IMR-90 (cell line): ENCODE measurements at regions of chr1 and their contacts with region 1.

Region 1: DNA sequence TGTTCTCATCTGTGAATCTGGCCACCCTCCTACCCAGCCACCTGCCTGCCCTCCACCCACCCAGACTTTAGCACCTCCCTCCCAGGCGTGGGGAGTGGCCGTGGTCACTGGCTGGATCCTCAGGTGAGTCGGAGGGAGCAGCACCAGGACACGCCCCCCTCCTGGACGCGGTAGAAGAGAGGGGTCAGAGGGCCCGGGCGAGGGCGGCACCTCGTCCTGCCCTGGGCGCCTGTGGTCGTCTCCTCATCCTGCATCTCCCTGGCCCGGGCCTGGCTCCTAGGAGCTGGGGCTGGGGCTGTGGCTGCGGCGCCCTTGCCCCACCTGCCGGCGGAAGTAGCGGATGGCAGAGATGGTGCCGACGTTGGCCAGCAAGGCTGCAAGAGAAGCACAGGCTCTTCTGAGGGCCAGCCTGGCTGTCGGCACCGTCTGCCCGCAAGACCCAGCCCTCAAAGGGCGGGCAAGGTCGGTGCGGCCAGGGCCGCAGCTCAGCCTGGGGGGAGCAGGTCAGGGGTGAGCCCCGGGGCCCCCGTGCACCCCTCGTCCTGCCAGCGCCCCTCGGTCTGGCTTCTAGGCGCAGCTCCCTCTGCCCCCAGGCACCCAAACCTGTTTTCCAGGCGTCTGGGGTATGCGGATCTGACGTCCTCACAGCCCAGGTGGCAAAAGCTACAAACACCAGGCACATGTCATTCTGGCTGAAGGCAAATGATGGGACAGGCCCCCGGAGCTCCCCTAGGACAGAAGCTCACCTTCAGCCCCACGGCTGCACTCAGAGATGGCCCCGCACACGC is 5.8 kb downstream of the PERM1 start:
- DNase-seq: peak; percentile 36
- ATAC-seq: peak; percentile 95
- H3K4me3 ChIP-seq: peak overlapping the region; percentile 0; the same call in 1 of the 2 replicates
- H3K27ac ChIP-seq: no peak overlapping the region
- H3K4me1 ChIP-seq: 0 out of 2 replicates have a peak, but pooled peaks cover 2% of the 10 kb centered on the region
- H3K27me3 ChIP-seq: no peaks in the 10 kb centered on the region
- CTCF ChIP-seq: peak; percentile 65
- POLR2A ChIP-seq: no peak
- RAD21 ChIP-seq: peak; percentile 71

Region 2: GRCh38 chr1:869499-870244 is 106.4 kb before region 1 on chr1:
- CTCF ChIA-PET with region 1: no interaction called
- POLR2A ChIA-PET with region 1: no interaction called
- dilution Hi-C with region 1: no loop called
- in situ Hi-C with region 1: no loop called
- intact Hi-C with region 1: loop called (anchors 2 kb)
- DNase-seq: peak; percentile 7
- ATAC-seq: peak; percentile 95
- H3K4me3 ChIP-seq: no peak overlapping the region
- H3K27ac ChIP-seq: no peak overlapping the region
- H3K4me1 ChIP-seq: no peaks in the 10 kb centered on the region
- H3K27me3 ChIP-seq: peaks cover 36% of the 10 kb centered on the region
- CTCF ChIP-seq: peak; percentile 71
- POLR2A ChIP-seq: no peak
- RAD21 ChIP-seq: peak; percentile 56